ENCODE measurements at regions of chr9 and their contacts with region 1.

Region 1: GRCh38 chr9:132249123-132249522 is 87.3 kb downstream of the NTNG2 start:
- DNase-seq: no peak
- ATAC-seq: no peak
- H3K4me3 ChIP-seq: no peak overlapping the region
- H3K27ac ChIP-seq: no peak overlapping the region
- H3K4me1 ChIP-seq: no peaks in the 10 kb centered on the region; the same call in 1 of the 2 replicates
- H3K27me3 ChIP-seq: no peaks in the 10 kb centered on the region
- CTCF ChIP-seq: no peak

Region 2: DNA sequence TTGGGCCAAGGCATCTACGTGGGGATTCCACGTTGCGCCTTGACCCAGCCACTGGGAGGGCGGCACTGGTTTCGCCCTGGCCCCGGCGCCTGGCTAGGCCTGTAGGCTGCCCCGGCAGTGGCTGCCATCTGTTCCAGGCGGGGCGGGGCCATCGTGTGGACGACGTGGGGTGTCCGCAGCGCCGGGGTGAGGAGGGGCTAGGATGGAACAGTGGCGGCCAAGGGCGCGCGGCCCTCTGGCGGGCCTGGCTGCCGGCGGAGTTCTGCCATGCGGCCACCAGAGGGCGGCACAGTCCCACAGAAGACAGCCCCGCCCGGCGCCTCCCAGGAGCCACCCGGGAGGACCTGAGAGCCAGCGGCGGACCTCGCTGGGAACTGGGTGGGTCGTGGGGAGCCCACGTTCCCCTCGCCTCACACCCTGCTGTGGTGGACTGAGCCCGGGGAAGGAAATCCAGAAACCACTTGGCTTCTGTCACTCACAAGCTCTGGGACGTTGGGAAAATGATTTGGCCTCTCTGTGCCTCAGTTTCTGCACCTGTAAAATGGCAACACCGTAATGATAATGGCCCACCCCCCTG is 486.7 kb before region 1 on chr9:
- CTCF ChIA-PET with region 1: no interaction called
- POLR2A ChIA-PET with region 1: no interaction called
- in situ Hi-C with region 1: no loop called
- intact Hi-C with region 1: loop called (anchors 5 kb)
- DNase-seq: no peak
- ATAC-seq: peak; percentile 94
- H3K4me3 ChIP-seq: no peak overlapping the region; a peak in 1 of 4 replicates
- H3K27ac ChIP-seq: no peak overlapping the region
- H3K4me1 ChIP-seq: no peaks in the 10 kb centered on the region
- H3K27me3 ChIP-seq: no peaks in the 10 kb centered on the region
- CTCF ChIP-seq: peak; percentile 85

Region 3: DNA sequence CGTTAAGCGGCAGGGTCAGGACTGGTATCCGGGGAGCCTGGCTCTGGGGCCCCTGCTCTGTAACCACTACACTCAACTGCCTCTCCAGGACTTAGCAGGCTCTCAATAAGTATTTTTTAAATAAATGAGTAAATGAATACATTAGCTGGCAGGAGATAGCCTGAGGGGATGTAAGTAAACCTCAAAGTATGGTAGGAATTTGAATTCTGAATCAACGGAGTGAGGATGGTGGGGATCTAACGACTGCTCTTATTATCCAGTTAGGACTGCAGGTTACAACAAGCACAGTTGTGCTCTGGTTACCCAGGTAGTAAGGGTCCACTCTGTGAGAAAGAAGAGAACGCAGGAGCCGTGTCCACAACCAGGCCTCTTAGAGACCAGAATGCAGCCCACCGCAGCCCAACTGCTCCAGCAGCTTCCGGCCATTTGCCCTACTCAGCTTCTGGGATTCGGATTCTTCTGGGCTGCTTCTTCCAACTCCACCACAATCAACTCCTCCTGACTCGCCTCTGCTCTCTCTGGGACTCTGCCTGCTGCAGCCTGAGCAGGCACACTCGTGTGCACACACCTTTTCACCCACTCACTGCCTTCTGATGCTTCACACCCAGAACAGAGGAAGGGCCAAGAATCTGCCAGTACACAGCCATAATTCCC is 222.1 kb before region 1 on chr9:
- CTCF ChIA-PET with region 1: no interaction called
- POLR2A ChIA-PET with region 1: interaction called, 16 read pairs
- in situ Hi-C with region 1: no loop called
- intact Hi-C with region 1: no loop called
- DNase-seq: no peak
- ATAC-seq: peak; percentile 81
- H3K4me3 ChIP-seq: no peak overlapping the region
- H3K27ac ChIP-seq: peak overlapping the region; percentile 54
- H3K4me1 ChIP-seq: peaks cover 19% of the 10 kb centered on the region
- H3K27me3 ChIP-seq: no peaks in the 10 kb centered on the region
- CTCF ChIP-seq: no peak

Region 4: DNA sequence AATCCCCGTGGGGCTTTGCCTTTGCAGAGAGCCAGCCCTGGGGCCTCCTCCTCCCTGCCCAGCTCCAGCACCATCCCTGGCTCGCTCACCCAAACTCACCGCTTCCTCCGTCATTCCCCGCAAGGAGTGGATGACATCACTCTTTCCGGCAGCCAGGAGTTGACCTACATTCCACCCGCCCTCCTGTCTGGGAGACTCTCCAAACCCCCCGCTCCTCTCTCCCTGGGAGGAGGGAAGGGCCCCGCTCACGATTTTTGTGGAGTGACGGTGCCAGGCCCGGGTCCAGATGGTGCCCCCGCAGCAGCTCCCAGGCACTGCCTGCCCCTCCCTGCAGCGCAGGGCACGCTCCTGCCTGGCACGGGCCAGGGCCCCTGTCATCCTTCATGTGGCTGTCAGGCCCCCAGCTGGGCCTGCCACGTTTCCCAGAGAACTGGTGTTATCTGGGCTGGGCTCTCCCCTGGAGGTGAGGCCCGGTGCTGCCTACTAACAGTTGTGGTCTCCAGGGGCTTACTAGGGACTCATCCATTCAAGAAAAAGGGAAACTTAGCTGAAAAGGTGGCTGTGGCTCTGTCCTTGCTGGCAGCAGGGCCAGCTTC is 35.0 kb before region 1 on chr9:
- CTCF ChIA-PET with region 1: no interaction called
- POLR2A ChIA-PET with region 1: no interaction called
- in situ Hi-C with region 1: no loop called
- intact Hi-C with region 1: no loop called
- DNase-seq: no peak
- ATAC-seq: 0 out of 2 replicates have a peak, but pooled peaks have one; percentile 60
- H3K4me3 ChIP-seq: no peak overlapping the region
- H3K27ac ChIP-seq: no peak overlapping the region
- H3K4me1 ChIP-seq: no peaks in the 10 kb centered on the region; the same call in 1 of the 2 replicates
- H3K27me3 ChIP-seq: no peaks in the 10 kb centered on the region
- CTCF ChIP-seq: no peak

Measured in Panc1 (cell line).